Activated CD4-positive, alpha-beta memory T cell treated with anti-CD3 and anti-CD28 coated beads for 36 hours (primary cell): ENCODE measurements at regions of chr3 and their contacts with region 1.

Region 1: DNA sequence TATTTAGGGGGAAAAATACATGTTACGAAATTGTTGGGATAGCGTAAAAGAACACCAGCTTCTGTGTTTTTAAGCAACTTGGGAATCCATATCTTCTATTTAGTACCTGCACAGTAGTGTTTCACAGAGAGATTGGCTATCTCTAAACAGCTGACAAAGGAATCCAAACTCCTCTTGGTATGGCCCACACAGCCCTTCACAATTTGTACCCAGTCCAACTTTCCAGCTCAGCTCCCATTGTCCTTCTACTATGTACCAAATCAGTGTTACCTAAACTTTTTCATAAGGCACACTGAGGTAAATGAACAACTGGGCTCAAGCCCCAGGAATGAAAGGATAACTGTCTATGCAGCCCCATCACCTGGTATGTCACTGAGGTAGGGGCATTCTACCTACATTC is 61.9 kb downstream of the TNIK start:
- DNase-seq: no peak
- H3K4me3 Mint-ChIP-seq: no peak overlapping the region
- H3K27ac Mint-ChIP-seq: no peak overlapping the region
- H3K4me1 Mint-ChIP-seq: peaks cover 36% of the 10 kb centered on the region
- H3K27me3 Mint-ChIP-seq: no peaks in the 10 kb centered on the region

Region 2: DNA sequence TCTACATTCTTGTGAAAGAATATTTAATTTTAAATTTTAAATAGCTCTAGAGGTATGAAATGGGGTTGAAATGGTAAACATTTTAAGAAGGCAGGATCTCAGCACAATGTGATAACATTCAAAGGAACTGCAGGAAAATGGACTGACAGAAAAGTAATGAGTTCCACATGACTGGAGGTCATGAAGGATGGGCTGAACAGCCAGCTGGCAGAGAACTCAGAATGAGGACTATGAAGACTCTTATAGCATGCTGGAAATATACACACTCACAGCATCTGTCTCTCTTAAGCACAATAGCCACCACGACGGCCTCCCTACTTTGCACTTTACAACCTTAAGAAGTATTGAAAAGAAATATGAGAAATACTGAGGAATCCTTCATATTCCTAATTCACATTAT is 32.9 kb before region 1 on chr3:
- CTCF ChIA-PET with region 1: no interaction called
- POLR2A ChIA-PET with region 1: no interaction called
- intact Hi-C with region 1: loop called (anchors 1 kb)
- DNase-seq: no peak
- H3K4me3 Mint-ChIP-seq: no peak overlapping the region
- H3K27ac Mint-ChIP-seq: no peak overlapping the region
- H3K4me1 Mint-ChIP-seq: peaks cover 44% of the 10 kb centered on the region
- H3K27me3 Mint-ChIP-seq: no peaks in the 10 kb centered on the region